ENCODE measurements at regions of chr2 and their contacts with region 1.

Region 1: DNA sequence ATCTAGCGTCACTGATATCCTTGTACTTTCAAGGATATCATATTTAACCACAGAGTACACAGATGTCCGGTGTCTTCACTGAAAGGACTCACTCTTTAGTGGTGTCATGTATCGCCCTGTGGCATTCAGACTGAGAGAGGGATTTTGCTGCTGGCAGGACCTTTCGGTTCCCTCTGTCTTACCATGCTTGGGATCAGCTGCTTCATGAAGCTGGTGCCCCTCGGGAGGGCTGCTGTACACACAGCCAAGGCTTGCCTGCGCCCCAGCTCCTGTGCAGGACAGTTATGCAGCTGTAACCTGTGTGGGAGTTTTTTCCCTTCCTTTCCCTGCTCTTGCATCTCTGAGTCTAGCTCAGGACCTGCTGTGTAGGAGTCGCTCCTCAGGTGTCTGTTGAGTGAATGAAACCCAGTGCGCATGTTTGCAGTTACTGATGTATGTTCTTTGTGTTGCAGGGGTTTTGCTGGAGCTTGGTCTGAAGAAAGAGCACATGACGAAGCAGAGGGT is 64.4 kb downstream of the GREB1 start:
- DNase-seq: peak; percentile 64
- ATAC-seq: peak; percentile 88
- H3K4me3 ChIP-seq: no peak overlapping the region
- H3K27ac ChIP-seq: no peak overlapping the region
- H3K4me1 ChIP-seq: peaks cover 12% of the 10 kb centered on the region
- H3K27me3 ChIP-seq: no peaks in the 10 kb centered on the region
- CTCF ChIP-seq: no peak

Region 2: GRCh38 chr2:11348209-11348749 is 250.0 kb before region 1 on chr2:
- CTCF ChIA-PET with region 1: no interaction called
- POLR2A ChIA-PET with region 1: no interaction called
- intact Hi-C with region 1: no loop called
- DNase-seq: no peak
- ATAC-seq: no peak
- H3K4me3 ChIP-seq: no peak overlapping the region
- H3K27ac ChIP-seq: no peak overlapping the region
- H3K4me1 ChIP-seq: peaks cover 24% of the 10 kb centered on the region
- H3K27me3 ChIP-seq: no peaks in the 10 kb centered on the region
- CTCF ChIP-seq: no peak

Region 3: DNA sequence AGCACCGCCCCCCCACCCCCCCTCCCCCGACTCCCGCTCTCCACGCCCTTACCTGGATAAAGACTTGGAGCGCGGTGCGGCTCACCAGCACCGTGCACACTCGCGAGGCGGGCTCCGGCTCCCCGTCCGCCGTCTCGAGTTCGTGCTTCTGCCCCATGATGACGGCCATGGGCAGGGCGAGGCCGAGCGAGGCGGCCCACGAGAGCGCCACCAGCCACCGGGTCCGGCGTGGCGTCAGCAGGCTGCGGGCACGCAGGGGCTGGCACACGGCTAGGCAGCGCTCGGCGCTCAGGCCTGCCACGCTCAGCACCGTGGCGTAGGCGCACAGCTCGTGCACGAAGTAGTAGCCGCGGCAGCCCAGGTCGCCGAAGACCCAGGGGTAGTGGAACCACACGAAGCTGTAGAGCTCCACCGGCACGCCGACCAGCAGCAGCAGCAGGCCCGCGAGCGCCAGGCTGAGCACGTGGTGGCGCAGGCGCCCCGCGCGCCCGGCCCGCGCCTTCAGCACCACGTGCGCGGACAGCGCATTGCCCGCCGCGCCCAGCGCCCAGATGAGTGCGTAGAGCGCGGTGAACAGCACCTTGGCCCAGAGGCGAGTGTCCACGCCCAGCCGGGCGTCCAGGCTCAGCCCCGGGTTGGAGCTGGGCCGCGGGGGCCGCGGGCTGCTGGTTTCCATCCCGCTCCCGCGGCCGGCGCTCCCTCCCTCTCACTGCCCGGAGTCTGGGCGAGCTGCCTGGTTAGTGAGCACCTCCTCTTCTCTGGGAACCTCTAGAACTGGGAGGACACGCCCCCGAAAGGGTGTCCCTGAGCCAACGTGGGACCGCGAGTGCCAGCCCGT is 71.4 kb after region 1 on chr2 and contains the start of gene NTSR2:
- CTCF ChIA-PET with region 1: no interaction called
- POLR2A ChIA-PET with region 1: no interaction called
- intact Hi-C with region 1: loop called (anchors 5 kb)
- DNase-seq: no peak
- ATAC-seq: peak; percentile 45
- H3K4me3 ChIP-seq: no peak within 1 kb of the TSS
- H3K27ac ChIP-seq: no peak within 1 kb of the TSS
- H3K4me1 ChIP-seq: peaks cover 24% of the 10 kb centered on the region
- H3K27me3 ChIP-seq: no peaks in the 10 kb centered on the region
- CTCF ChIP-seq: no peak
- total RNA-seq, gene NTSR2: not detected in 2 replicates

Region 4: DNA sequence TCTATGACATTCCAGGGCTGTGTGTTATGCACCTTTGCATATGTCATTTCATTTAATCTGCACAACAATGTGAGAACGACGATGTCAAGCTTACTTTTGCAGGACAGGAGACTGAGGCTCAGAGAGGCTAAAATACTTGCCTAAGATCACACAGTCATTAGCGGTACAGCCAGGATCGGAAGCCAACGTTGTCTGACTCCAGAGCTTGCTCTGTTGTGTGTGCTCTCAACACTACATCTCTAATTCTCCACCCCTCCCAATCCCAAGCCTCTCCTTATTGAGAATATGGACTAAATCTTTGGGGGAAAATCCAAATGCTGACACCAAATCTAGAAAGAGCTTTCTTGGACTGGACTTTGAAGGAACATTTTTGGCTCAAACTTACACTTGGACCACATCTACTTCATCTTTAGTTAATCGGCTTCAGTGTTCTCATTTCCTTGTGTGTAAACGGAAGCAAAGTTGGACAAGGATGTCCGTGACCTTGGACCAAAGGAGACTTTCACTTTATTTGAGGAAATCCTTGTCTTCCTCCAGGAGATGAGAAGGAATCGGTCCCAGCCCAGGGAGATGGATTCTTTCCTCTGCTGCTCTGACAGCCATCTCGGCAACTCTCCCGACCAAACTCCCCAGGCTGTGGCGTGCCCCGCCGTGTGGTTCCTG is 390.5 kb after region 1 on chr2:
- CTCF ChIA-PET with region 1: no interaction called
- POLR2A ChIA-PET with region 1: no interaction called
- intact Hi-C with region 1: no loop called
- DNase-seq: no peak
- ATAC-seq: no peak
- H3K4me3 ChIP-seq: no peak overlapping the region
- H3K27ac ChIP-seq: no peak overlapping the region
- H3K4me1 ChIP-seq: no peaks in the 10 kb centered on the region
- H3K27me3 ChIP-seq: no peaks in the 10 kb centered on the region
- CTCF ChIP-seq: no peak

Region 5: GRCh38 chr2:12192762-12193161 is 594.5 kb after region 1 on chr2:
- CTCF ChIA-PET with region 1: no interaction called
- POLR2A ChIA-PET with region 1: no interaction called
- intact Hi-C with region 1: no loop called
- DNase-seq: no peak
- ATAC-seq: no peak
- H3K4me3 ChIP-seq: no peak overlapping the region
- H3K27ac ChIP-seq: no peak overlapping the region
- H3K4me1 ChIP-seq: no peaks in the 10 kb centered on the region
- H3K27me3 ChIP-seq: no peaks in the 10 kb centered on the region
- CTCF ChIP-seq: no peak

Measured in PC-3 (cell line).